CD14-positive monocyte (primary cell): ENCODE measurements at regions of chr1 and their contacts with region 1.

Region 1: GRCh38 chr1:29033829-29034466 is 89.8 kb downstream of the TMEM200B start:
- DNase-seq: peak; percentile 13 to 40 (median 33)
- H3K4me3 ChIP-seq: no peak overlapping the region
- H3K4me3 Mint-ChIP-seq: no peak overlapping the region
- H3K27ac ChIP-seq: no peak overlapping the region
- H3K27ac Mint-ChIP-seq: no peak overlapping the region
- H3K4me1 ChIP-seq: no peaks in the 10 kb centered on the region
- H3K4me1 Mint-ChIP-seq: no peaks in the 10 kb centered on the region
- H3K27me3 ChIP-seq: no peaks in the 10 kb centered on the region
- H3K27me3 Mint-ChIP-seq: no peaks in the 10 kb centered on the region
- CTCF ChIP-seq: peak; percentile 76

Region 2: DNA sequence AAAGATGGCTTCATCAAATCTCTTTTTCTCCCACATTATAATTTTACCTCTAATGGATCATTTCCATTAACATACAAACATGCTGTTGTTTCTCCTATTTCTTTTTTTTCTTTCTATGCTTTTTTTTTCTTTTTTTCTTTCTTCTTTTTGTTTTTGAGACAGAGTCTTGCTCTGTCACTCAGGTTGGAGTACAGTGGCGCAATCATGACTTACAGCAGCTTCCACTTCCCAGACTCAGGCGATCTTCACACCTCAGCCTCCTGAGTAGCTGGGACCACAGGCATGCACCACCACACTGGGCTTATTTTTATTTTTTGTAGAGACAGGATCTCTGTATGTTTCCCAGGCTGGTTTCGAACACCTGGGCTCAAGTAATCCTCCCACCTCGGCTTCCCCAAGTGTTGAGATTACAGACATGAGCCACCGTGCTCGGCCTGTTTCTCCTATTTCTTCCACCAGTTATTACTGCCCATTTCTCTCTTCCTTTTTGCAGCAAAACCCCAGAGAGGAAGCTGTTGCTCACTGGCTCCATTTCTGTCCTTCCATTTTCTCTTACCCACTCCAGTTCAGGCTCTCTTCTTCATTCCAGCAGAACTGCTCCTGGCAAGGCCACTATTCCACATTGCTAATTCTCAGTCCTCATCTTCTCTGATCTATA is 254.1 kb before region 1 on chr1:
- intact Hi-C with region 1: loop called in 1 of 2 experiments (anchors 10 kb)
- DNase-seq: peak; percentile 20 to 37 (median 35)
- H3K4me3 ChIP-seq: peak overlapping the region in 1 of 3 experiments; percentile 40
- H3K4me3 Mint-ChIP-seq: peak overlapping the region; percentile 7 to 67
- H3K27ac ChIP-seq: peak overlapping the region; percentile 56 to 80
- H3K27ac Mint-ChIP-seq: peak overlapping the region; percentile 54 to 91 (median 78)
- H3K4me1 ChIP-seq: peaks cover 25 to 29% of the 10 kb centered on the region in 2 donors
- H3K4me1 Mint-ChIP-seq: peaks cover 39% of the 10 kb centered on the region
- H3K27me3 ChIP-seq: no peaks in the 10 kb centered on the region
- H3K27me3 Mint-ChIP-seq: peaks cover 0 to 2% (median 0%) of the 10 kb centered on the region in 3 donors
- CTCF ChIP-seq: no peak

Region 3: DNA sequence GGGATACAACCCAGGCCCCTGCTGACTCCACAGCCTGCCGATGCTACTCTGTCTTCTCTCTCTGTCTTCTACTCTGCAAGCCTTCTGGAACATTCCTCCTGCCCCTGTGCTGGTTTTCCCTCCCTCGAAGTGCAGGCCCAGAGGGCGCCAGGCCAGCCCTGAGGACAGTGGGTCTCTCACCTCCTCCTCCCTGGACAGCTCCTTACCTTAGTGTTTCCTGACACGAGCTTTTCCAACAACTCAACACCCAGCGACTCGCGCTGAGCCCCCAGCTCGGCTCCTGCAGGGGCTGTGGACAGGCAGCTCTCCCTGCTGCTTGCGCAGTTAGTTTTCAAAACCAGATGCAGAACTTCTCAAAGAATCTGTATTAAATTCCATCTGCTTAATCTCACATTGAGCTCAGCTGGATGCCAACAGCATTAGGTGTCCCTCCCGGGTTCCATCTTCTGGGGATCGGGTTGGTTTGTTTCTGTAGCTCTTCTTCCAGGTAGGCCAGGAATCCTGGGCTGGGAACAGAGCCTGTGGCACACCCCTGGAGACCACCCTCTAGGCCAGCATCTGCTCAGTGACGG is 256.6 kb after region 1 on chr1:
- intact Hi-C with region 1: no loop called
- DNase-seq: no peak
- H3K4me3 ChIP-seq: no peak overlapping the region
- H3K4me3 Mint-ChIP-seq: no peak overlapping the region
- H3K27ac ChIP-seq: no peak overlapping the region
- H3K27ac Mint-ChIP-seq: no peak overlapping the region
- H3K4me1 ChIP-seq: no peaks in the 10 kb centered on the region
- H3K4me1 Mint-ChIP-seq: peaks cover 2% of the 10 kb centered on the region
- H3K27me3 ChIP-seq: no peaks in the 10 kb centered on the region
- H3K27me3 Mint-ChIP-seq: peaks cover 0 to 11% (median 8%) of the 10 kb centered on the region in 3 donors
- CTCF ChIP-seq: no peak